Activated T-helper 1 cell treated with anti-CD3 and anti-CD28 coated beads, Interleukin-12 subunit alpha, Interleukin-12 subunit beta, Interleukin-2, Interleukin-4 antibody, amounts not matched to agents 30 ng/mL and 10 ng/mL and 1 ng/mL, durations not matched to agents 14 hours and 24 hours and 36 hours (primary cell): ENCODE measurements at regions of chr1 and their contacts with region 1.

Region 1: DNA sequence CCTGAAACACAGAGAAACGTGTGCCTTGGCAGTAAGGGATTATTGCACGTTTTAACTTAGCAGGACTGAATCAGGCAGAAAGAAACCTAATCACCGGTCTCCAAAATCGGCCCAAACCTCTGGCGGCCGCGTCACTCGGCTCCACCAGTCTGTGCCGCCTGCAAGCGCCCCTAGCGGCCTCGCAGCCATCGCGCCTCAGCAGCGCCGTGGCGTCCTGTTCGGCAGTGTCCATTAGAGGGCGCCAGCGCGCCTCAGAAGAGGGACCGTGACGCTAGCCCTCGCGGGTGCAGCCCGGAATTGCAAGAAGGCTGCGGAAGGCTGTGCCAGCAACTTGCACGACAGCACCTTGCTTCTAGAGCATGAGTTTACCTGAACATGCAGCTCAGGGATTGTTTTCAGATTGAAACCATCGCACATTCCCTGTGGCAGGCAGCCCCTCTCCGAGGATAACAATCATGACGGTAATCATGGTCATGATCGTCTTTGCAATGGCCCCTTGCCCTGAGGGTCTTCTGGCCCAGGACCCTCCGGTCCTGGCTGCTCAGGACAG is 164.4 kb downstream of the TRIM33 start:
- DNase-seq: peak; percentile 98
- H3K4me3 Mint-ChIP-seq: peak overlapping the region; percentile 93
- H3K27ac Mint-ChIP-seq: peak overlapping the region; percentile 91
- H3K4me1 Mint-ChIP-seq: peaks cover 26% of the 10 kb centered on the region
- H3K27me3 Mint-ChIP-seq: no peaks in the 10 kb centered on the region

Region 2: DNA sequence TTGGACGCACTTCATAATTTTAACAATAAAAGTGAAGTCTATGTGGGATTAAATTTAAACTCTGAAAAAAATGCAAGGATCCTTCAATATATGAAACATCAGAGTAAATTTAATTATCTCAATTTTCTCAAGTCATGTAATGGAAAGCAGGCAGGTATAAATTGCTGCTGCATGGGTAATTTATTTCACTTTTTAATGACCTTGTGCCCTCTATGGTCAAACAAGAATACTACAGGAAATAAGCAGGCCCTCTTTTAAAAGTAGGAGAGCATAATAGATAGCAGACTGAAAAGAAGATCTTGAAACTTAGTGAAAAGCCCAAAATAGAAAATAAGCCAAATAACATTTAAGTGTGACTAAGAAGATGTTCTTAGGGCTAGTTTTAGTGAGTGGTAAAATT is 212.0 kb after region 1 on chr1:
- intact Hi-C with region 1: loop called (anchors 1 kb)
- DNase-seq: no peak
- H3K4me3 Mint-ChIP-seq: no peak overlapping the region
- H3K27ac Mint-ChIP-seq: no peak overlapping the region
- H3K4me1 Mint-ChIP-seq: no peaks in the 10 kb centered on the region
- H3K27me3 Mint-ChIP-seq: no peaks in the 10 kb centered on the region

Region 3: GRCh38 chr1:114670083-114671010 is 323.8 kb after region 1 on chr1:
- intact Hi-C with region 1: loop called (anchors 1 kb)
- DNase-seq: peak; percentile 76
- H3K4me3 Mint-ChIP-seq: peak overlapping the region; percentile 89
- H3K27ac Mint-ChIP-seq: peak overlapping the region; percentile 20
- H3K4me1 Mint-ChIP-seq: peaks cover 8% of the 10 kb centered on the region
- H3K27me3 Mint-ChIP-seq: peaks cover 48% of the 10 kb centered on the region

Region 4: DNA sequence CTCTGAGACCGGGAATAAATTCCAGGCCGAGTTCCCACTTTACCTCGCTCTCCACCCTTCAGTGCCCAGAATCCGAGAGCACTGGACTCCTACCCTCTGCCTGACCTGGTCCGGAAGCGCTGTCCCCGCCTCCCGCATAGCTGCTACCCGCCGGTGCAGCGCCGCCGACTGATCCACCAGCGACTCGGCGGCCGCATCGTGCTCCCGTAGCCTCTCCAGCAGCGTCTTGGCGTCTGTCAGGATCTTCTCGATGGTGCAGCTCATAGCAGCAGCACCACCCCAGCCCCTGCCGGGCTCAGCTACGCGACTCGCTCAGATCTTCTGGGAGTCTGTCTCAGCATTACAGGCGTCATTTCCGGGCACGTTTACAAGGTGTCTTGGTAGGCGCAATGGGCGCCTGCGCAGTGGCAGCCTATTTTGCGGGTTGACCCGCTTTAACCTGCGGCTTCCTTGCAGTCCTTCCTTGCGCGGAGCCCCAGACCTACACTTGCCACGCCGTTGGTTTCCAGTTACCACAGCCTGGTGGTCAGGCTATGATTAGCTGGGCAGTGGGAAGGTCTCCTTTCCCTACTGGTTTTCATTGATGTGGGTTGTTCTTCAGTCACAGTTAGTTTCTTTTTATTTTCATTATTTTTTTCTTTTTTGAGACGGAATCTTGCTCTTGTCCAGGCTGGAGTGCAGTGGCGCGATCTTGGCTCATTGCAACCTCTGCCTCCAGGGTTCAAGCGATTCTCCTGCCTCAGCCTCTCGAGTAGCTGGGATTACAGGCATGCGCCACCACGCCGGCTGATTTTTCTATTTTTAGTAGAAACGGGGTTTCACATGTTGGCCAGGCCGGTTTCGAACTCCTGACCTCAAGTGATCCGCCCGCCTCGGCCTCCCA is 434.0 kb after region 1 on chr1 and contains the start of gene SIKE1:
- intact Hi-C with region 1: loop called (anchors 1 kb)
- DNase-seq: peak; percentile 92
- H3K4me3 Mint-ChIP-seq: peak within 1 kb of the TSS; percentile 100
- H3K27ac Mint-ChIP-seq: peak within 1 kb of the TSS; percentile 96
- H3K4me1 Mint-ChIP-seq: peaks cover 34% of the 10 kb centered on the region
- H3K27me3 Mint-ChIP-seq: peaks cover 4% of the 10 kb centered on the region
- total RNA-seq, gene SIKE1: 59.4 and 65.0 TPM in 2 replicates

Region 5: GRCh38 chr1:115112496-115113375 is 766.2 kb after region 1 on chr1:
- intact Hi-C with region 1: loop called (anchors 5 kb)
- DNase-seq: peak; percentile 20
- H3K4me3 Mint-ChIP-seq: no peak overlapping the region
- H3K27ac Mint-ChIP-seq: no peak overlapping the region
- H3K4me1 Mint-ChIP-seq: no peaks in the 10 kb centered on the region
- H3K27me3 Mint-ChIP-seq: peaks cover 5% of the 10 kb centered on the region